ENCODE measurements at regions of chr1 and their contacts with region 1.

Region 1: GRCh38 chr1:51044834-51045233 is 57.2 kb upstream of the C1orf185 start:
- DNase-seq: no peak
- H3K4me3 ChIP-seq: no peak overlapping the region
- H3K27ac ChIP-seq: no peak overlapping the region
- H3K4me1 ChIP-seq: no peaks in the 10 kb centered on the region
- H3K27me3 ChIP-seq: no peaks in the 10 kb centered on the region
- CTCF ChIP-seq: peak; percentile 31 to 47 (median 33)
- EP300 ChIP-seq: no peak
- POLR2A ChIP-seq: no peak

Region 2: DNA sequence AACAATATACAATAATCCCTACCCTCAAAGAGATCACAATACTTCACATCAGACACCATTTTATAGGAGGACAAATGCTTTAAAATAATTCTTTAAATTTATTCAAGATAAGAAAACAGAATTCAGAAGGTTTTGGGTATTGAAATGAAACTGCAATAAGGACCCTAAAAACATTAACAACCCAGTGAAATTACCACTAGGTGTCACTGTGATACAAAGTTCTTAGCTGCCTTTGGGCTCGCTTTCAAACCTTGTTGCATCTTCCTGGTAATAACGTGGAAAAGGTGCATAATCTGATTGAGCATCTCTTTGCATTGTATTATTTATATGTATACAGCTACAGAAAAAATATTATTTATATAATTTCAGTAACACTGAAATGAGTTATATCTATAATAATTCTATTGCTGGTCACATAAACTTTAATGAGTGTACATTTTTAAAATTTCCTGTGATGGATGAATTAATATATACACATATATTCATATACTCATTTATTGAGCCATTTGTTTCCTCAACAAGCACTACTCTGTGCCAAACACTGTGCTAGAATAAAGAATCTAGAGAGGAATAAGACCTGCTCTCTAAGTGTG is 270.0 kb before region 1 on chr1:
- intact Hi-C with region 1: loop called (anchors 5 kb)
- DNase-seq: no peak
- H3K4me3 ChIP-seq: no peak overlapping the region
- H3K27ac ChIP-seq: no peak overlapping the region
- H3K4me1 ChIP-seq: no peaks in the 10 kb centered on the region
- H3K27me3 ChIP-seq: no peaks in the 10 kb centered on the region
- CTCF ChIP-seq: peak; percentile 68 to 74 (median 70)
- EP300 ChIP-seq: no peak
- POLR2A ChIP-seq: no peak

Region 3: DNA sequence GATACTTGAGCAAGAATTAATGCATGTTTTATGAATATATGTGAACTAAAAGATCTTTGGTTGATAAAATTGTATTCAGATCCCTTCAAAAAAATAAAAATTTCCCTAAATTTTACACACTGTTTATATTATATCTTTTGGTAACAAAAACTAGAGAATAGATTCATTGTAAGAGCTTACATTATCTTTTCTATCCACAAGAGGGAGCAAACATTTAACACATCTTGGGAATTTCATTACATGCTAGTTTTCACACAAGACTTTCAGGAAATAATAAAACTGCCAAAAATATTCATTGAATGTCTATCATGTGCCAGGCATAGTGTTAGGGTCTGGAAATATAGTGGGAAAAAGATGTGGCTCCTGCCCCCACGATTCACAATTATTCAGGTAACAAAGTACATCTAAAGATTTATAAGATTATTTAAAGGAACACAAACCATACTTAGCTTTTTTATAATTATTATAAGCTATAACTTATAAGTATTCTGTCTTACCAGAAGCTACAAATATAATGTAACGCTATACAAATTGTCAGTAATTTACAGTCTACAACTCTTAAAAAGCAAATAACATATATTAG is 115.4 kb before region 1 on chr1:
- intact Hi-C with region 1: loop called (anchors 5 kb)
- DNase-seq: no peak
- H3K4me3 ChIP-seq: no peak overlapping the region
- H3K27ac ChIP-seq: no peak overlapping the region
- H3K4me1 ChIP-seq: peaks cover 0 to 8% (median 5%) of the 10 kb centered on the region in 4 donors
- H3K27me3 ChIP-seq: no peaks in the 10 kb centered on the region
- CTCF ChIP-seq: peak; percentile 57 to 67 (median 59)
- EP300 ChIP-seq: no peak
- POLR2A ChIP-seq: no peak

Region 4: DNA sequence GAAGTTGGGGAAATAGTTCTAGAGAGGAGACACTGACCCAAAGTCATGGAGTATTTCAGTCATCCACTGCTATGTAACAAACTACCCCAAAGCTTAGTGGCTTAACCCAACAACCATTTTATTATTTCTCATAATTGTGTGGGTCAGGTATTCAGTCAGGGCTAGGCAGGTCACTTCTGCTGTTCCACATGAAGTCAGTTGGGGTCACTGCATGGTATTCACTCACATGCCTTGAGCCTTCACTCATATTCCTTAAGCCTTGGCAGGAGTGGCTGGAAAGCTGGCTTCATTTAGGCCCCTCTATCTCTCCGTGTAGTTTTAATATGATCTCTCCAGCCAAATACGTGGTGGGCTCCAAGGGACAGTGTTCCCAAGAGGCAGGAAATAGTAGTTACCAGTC is 173.7 kb after region 1 on chr1:
- intact Hi-C with region 1: no loop called
- DNase-seq: no peak
- H3K4me3 ChIP-seq: no peak overlapping the region
- H3K27ac ChIP-seq: no peak overlapping the region
- H3K4me1 ChIP-seq: peaks cover 0 to 10% (median 0%) of the 10 kb centered on the region in 4 donors
- H3K27me3 ChIP-seq: no peaks in the 10 kb centered on the region
- CTCF ChIP-seq: no peak
- EP300 ChIP-seq: no peak
- POLR2A ChIP-seq: no peak